IMR-90 (cell line): ENCODE measurements at regions of chr15 and their contacts with region 1.

Region 1: GRCh38 chr15:95025924-95026728 is 794.8 kb downstream of the MCTP2 start:
- DNase-seq: peak; percentile 61
- ATAC-seq: peak; percentile 93
- H3K4me3 ChIP-seq: no peak overlapping the region
- H3K27ac ChIP-seq: no peak overlapping the region
- H3K4me1 ChIP-seq: no peaks in the 10 kb centered on the region
- H3K27me3 ChIP-seq: peaks cover 2% of the 10 kb centered on the region; the same call in 1 of the 2 replicates
- CTCF ChIP-seq: peak; percentile 77
- POLR2A ChIP-seq: no peak
- RAD21 ChIP-seq: peak; percentile 81

Region 2: GRCh38 chr15:94412979-94413746 is 613.0 kb before region 1 on chr15:
- CTCF ChIA-PET with region 1: no interaction called
- POLR2A ChIA-PET with region 1: no interaction called
- dilution Hi-C with region 1: no loop called
- in situ Hi-C with region 1: loop called (anchors 25 kb)
- intact Hi-C with region 1: no loop called
- DNase-seq: peak; percentile 25
- ATAC-seq: no peak
- H3K4me3 ChIP-seq: no peak overlapping the region
- H3K27ac ChIP-seq: no peak overlapping the region
- H3K4me1 ChIP-seq: no peaks in the 10 kb centered on the region
- H3K27me3 ChIP-seq: no peaks in the 10 kb centered on the region
- CTCF ChIP-seq: peak; percentile 46
- POLR2A ChIP-seq: no peak
- RAD21 ChIP-seq: peak; percentile 41

Region 3: GRCh38 chr15:95284933-95285421 is 258.9 kb after region 1 on chr15:
- CTCF ChIA-PET with region 1: interaction called, 6 read pairs
- POLR2A ChIA-PET with region 1: no interaction called
- dilution Hi-C with region 1: no loop called
- in situ Hi-C with region 1: no loop called
- intact Hi-C with region 1: loop called (anchors 5 kb)
- DNase-seq: peak; percentile 70
- ATAC-seq: peak; percentile 24
- H3K4me3 ChIP-seq: no peak overlapping the region
- H3K27ac ChIP-seq: peak overlapping the region; percentile 49; the same call in 1 of the 2 replicates
- H3K4me1 ChIP-seq: peaks cover 15% of the 10 kb centered on the region
- H3K27me3 ChIP-seq: no peaks in the 10 kb centered on the region
- CTCF ChIP-seq: peak; percentile 33
- POLR2A ChIP-seq: no peak
- RAD21 ChIP-seq: peak; percentile 41

Region 4: GRCh38 chr15:95557226-95558046 is 531.3 kb after region 1 on chr15:
- CTCF ChIA-PET with region 1: no interaction called
- POLR2A ChIA-PET with region 1: no interaction called
- dilution Hi-C with region 1: no loop called
- in situ Hi-C with region 1: no loop called
- intact Hi-C with region 1: loop called (anchors 10 kb)
- DNase-seq: peak; percentile 95
- ATAC-seq: peak; percentile 83
- H3K4me3 ChIP-seq: no peak overlapping the region
- H3K27ac ChIP-seq: peak overlapping the region; percentile 70
- H3K4me1 ChIP-seq: peaks cover 13% of the 10 kb centered on the region
- H3K27me3 ChIP-seq: no peaks in the 10 kb centered on the region
- CTCF ChIP-seq: no peak
- POLR2A ChIP-seq: 0 out of 2 replicates have a peak, but pooled peaks have one; percentile 24
- RAD21 ChIP-seq: no peak

Region 5: GRCh38 chr15:95590533-95591044 is 564.5 kb after region 1 on chr15:
- CTCF ChIA-PET with region 1: no interaction called
- POLR2A ChIA-PET with region 1: no interaction called
- dilution Hi-C with region 1: no loop called
- in situ Hi-C with region 1: no loop called
- intact Hi-C with region 1: loop called (anchors 10 kb)
- DNase-seq: no peak
- ATAC-seq: no peak
- H3K4me3 ChIP-seq: no peak overlapping the region
- H3K27ac ChIP-seq: no peak overlapping the region
- H3K4me1 ChIP-seq: peaks cover 2% of the 10 kb centered on the region; the same call in 1 of the 2 replicates
- H3K27me3 ChIP-seq: no peaks in the 10 kb centered on the region; the same call in 1 of the 2 replicates
- CTCF ChIP-seq: no peak
- POLR2A ChIP-seq: no peak
- RAD21 ChIP-seq: no peak

Region 6: GRCh38 chr15:96345560-96346399 is 1319.7 kb after region 1 on chr15:
- CTCF ChIA-PET with region 1: no interaction called
- POLR2A ChIA-PET with region 1: no interaction called
- dilution Hi-C with region 1: no loop called
- in situ Hi-C with region 1: loop called (anchors 10 kb)
- intact Hi-C with region 1: no loop called
- DNase-seq: peak; percentile 83
- ATAC-seq: peak; percentile 46
- H3K4me3 ChIP-seq: peak overlapping the region; percentile 40
- H3K27ac ChIP-seq: peak overlapping the region; percentile 88
- H3K4me1 ChIP-seq: peaks cover 49% of the 10 kb centered on the region
- H3K27me3 ChIP-seq: no peaks in the 10 kb centered on the region
- CTCF ChIP-seq: peak; percentile 56
- POLR2A ChIP-seq: no peak
- RAD21 ChIP-seq: peak; percentile 67

Region 7: DNA sequence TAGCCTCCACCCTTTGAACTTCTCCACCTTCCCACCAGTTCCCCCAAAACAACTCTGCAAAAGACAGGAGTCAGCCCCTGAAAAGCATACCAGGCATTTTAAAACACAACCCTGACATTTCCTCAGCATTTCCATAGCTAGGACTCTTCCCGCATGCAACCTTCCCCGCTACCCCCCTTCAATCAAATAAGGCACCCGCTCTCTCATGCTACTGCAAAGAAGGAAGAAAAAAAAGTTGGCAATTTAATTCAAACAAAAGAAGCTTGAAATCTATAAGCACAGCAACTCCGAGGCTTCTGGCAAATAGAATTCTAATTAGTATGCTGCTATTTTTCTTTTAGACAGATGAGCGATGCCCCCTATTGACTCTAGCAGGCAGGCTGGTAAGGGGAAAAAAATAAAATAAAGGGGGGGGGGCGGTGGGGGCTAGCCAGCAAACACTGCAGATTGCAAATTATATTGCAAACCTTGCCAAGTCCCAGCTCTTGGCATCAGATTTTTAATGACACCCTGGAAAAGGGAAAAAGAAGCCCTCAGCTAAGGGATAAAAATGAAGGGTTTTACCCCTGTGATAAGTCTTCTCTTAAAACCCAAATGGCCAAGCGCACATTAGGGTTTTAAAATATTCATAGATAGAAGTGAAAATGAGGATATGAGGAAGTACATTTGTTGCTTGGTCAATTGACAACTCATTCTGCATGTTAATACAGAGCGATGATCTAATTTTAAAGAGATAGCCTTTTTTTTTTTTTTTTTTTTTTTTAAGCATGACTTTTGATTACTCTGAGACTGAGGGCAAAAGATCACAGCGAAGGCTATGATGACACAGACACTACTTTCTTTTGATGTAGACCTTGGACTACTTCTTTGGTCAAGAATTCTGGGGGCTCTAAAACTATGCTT is 1559.6 kb after region 1 on chr15:
- CTCF ChIA-PET with region 1: no interaction called
- POLR2A ChIA-PET with region 1: no interaction called
- dilution Hi-C with region 1: no loop called
- in situ Hi-C with region 1: no loop called
- intact Hi-C with region 1: loop called (anchors 10 kb)
- DNase-seq: peak; percentile 6
- ATAC-seq: no peak
- H3K4me3 ChIP-seq: no peak overlapping the region
- H3K27ac ChIP-seq: no peak overlapping the region
- H3K4me1 ChIP-seq: no peaks in the 10 kb centered on the region
- H3K27me3 ChIP-seq: no peaks in the 10 kb centered on the region; the same call in 1 of the 2 replicates
- CTCF ChIP-seq: peak; percentile 46
- POLR2A ChIP-seq: no peak
- RAD21 ChIP-seq: peak; percentile 38; the same call in 1 of the 2 replicates